B cell (primary cell): ENCODE measurements at regions of chr5 and their contacts with region 1.

Region 1: DNA sequence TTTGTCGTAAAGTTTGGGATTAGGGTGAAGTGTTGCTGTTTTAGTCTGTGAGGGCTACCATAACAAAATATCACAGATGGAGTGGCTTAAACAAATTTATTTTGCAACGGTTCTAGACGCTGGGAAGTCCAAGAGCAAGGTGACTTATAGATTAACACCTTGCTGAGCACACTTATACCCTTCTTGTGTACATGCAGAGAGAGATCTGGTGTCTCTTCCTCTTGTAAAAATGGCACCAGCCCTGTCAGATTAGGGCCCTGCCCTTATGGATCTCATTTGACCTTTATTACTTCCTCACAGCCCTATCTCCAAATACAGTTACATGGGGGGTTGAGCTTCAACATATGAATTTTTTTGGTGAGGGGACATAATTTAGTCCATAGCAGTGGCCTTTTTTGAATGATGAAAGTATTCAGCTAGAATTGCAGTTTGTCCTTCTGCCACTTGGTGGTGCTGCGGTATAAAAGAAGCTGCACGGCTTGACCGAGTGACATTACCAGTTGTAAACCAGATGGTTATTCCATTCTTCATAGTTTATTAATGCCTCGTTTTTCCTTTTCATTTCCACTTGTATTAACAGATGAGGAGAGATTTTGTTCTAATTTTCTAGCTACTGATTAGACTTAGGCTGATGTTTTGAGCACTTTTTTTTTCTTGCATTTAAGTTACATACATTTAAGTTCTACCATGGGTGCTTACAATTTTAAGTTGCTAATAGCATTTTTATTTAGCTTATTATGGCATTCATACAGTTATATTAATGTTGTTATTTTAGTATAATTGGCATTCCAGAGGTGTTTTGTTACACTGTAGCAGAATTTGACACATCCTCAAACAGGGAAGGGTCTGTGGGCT is 19.4 kb downstream of the DCP2 start:
- DNase-seq: peak; percentile 76
- ATAC-seq: peak; percentile 72
- H3K4me3 ChIP-seq: no peak overlapping the region
- H3K4me3 Mint-ChIP-seq: no peak overlapping the region
- H3K27ac ChIP-seq: no peak overlapping the region
- H3K27ac Mint-ChIP-seq: no peak overlapping the region
- H3K4me1 ChIP-seq: peaks cover 0 to 4% of the 10 kb centered on the region in 2 donors
- H3K4me1 Mint-ChIP-seq: peaks cover 17% of the 10 kb centered on the region
- H3K27me3 ChIP-seq: no peaks in the 10 kb centered on the region
- H3K27me3 Mint-ChIP-seq: no peaks in the 10 kb centered on the region
- CTCF ChIP-seq: peak; percentile 98

Region 2: DNA sequence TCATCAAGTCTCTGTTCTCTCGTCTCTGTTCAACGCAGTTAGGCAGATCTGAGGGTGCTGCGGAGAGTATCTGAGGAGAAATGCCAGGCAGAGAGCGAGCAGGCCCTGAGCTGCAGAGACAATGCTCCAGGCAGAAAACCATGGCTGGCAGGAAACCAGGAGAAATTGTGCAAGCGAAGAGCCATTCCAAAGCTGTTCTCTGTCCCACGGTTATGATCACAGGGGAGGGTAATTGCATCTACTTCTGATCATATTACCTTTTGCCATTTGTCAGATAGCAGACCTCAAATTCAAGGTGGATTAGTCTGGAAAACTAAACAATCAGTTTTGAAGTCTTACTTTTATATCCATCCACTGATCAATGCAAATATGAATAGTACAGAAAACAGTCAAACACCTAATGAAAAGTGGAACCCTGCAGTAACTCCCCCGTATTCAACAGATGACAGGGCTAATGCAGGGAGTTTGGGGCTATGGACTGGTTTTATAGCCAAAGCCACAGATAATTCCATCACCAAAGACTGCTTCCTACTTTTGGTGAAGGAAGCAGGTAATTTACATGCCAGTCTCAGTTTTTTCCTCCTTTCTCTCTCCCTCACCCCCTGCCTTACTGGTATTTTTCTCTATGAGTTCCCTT is 208.7 kb after region 1 on chr5:
- CTCF ChIA-PET with region 1: no interaction called
- POLR2A ChIA-PET with region 1: no interaction called
- intact Hi-C with region 1: no loop called
- DNase-seq: no peak
- ATAC-seq: no peak
- H3K4me3 ChIP-seq: no peak overlapping the region
- H3K4me3 Mint-ChIP-seq: no peak overlapping the region
- H3K27ac ChIP-seq: no peak overlapping the region
- H3K27ac Mint-ChIP-seq: no peak overlapping the region
- H3K4me1 ChIP-seq: no peaks in the 10 kb centered on the region
- H3K4me1 Mint-ChIP-seq: no peaks in the 10 kb centered on the region
- H3K27me3 ChIP-seq: no peaks in the 10 kb centered on the region
- H3K27me3 Mint-ChIP-seq: peaks cover 6% of the 10 kb centered on the region
- CTCF ChIP-seq: no peak

Region 3: DNA sequence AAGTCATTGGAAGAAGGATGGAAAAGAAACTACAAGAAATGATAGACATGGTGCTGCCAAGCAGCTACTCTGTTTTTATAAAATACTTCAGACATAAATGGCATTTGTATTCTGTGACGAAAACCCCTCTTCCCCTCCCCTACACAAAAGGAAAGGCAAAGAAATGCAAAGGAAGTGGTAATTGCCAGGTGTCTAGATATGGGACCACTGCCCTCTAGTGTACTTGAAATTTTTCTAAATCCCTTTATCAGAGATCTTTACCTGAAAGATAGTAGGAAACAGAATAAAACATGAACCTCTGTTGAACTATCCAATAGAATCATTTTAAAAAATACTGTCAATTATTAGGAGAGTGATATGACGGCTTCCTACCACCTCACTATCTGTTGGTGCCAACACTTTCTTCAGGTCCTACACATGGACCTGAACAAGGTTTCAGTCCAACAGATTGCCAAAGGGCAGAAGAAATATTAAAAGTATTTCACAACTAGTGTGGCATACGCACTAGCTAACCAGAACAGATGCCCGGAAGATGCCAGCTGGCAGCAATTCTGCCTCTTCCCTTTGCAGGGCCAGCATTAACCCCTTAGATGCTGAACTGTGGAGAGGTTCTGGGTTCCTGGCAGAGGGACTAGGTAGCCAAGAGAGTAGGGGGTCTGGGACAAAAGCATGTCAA is 334.7 kb after region 1 on chr5:
- CTCF ChIA-PET with region 1: interaction called, 45 read pairs
- POLR2A ChIA-PET with region 1: interaction called, 8 read pairs
- intact Hi-C with region 1: no loop called
- DNase-seq: peak; percentile 43
- ATAC-seq: peak; percentile 43
- H3K4me3 ChIP-seq: peak overlapping the region in 1 of 5 experiments; percentile 27
- H3K4me3 Mint-ChIP-seq: no peak overlapping the region
- H3K27ac ChIP-seq: no peak overlapping the region
- H3K27ac Mint-ChIP-seq: no peak overlapping the region
- H3K4me1 ChIP-seq: peaks cover 0 to 6% of the 10 kb centered on the region in 2 donors
- H3K4me1 Mint-ChIP-seq: peaks cover 5% of the 10 kb centered on the region
- H3K27me3 ChIP-seq: no peaks in the 10 kb centered on the region
- H3K27me3 Mint-ChIP-seq: peaks cover 6% of the 10 kb centered on the region
- CTCF ChIP-seq: peak; percentile 34

Region 4: DNA sequence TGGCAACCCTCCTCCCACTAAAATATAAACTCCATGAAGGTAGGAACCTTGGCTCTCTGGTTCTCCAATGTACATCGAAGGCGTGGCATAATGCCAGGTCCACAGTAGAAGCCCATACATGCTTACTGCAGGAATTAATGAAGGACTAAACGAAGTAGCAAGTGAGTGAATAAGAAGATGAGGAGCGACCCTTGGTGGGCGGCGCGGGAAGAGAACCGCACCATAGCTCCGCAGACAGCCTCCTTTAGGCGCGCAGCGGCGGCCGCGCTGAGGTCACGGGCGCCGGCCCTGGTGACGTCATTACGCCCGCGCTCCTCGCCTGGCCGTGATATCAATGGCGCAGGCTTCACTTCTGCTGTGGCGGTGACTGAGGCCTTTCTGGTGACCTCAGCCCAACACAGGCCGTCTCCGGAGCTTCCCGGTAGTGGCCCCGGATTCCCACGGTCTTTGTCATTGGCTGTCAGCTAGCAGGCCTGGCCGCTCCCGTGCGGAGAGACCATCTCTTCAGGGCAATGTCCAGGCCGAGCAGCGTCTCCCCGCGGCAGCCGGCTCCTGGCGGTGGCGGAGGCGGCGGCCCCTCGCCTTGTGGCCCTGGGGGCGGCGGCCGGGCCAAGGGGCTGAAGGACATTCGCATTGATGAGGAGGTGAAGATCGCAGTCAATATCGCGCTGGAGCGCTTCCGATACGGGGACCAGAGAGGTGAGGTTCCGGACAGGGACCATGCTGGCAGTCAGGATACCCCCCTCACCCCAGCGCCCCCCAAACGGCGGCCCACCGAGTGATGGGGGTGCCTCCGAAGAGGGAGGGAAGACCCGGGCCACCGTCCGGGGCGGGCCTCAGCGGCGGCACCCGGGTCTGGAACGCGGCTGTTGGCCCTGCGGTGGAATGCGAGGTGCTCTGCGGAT is 517.6 kb after region 1 on chr5 and contains the start of gene YTHDC2:
- CTCF ChIA-PET with region 1: interaction called, 29 read pairs
- POLR2A ChIA-PET with region 1: no interaction called
- intact Hi-C with region 1: loop called (anchors 5 kb)
- DNase-seq: peak; percentile 93
- ATAC-seq: peak; percentile 97
- H3K4me3 ChIP-seq: peak within 1 kb of the TSS; percentile 59 to 93 (median 84)
- H3K4me3 Mint-ChIP-seq: peak within 1 kb of the TSS; percentile 99
- H3K27ac ChIP-seq: peak within 1 kb of the TSS; percentile 83 to 93
- H3K27ac Mint-ChIP-seq: peak within 1 kb of the TSS; percentile 95
- H3K4me1 ChIP-seq: peaks cover 7 to 17% of the 10 kb centered on the region in 2 donors
- H3K4me1 Mint-ChIP-seq: peaks cover 30% of the 10 kb centered on the region
- H3K27me3 ChIP-seq: peaks cover 0 to 8% (median 3%) of the 10 kb centered on the region in 4 experiments
- H3K27me3 Mint-ChIP-seq: peaks cover 18% of the 10 kb centered on the region
- CTCF ChIP-seq: peak; percentile 18
- total RNA-seq, gene YTHDC2: 52.6 and 62.4 TPM in 2 replicates

Region 5: GRCh38 chr5:113606298-113607134 is 610.5 kb after region 1 on chr5:
- CTCF ChIA-PET with region 1: interaction called, 52 read pairs
- POLR2A ChIA-PET with region 1: no interaction called
- intact Hi-C with region 1: no loop called
- DNase-seq: peak; percentile 61
- ATAC-seq: peak; percentile 57
- H3K4me3 ChIP-seq: no peak overlapping the region
- H3K4me3 Mint-ChIP-seq: no peak overlapping the region
- H3K27ac ChIP-seq: no peak overlapping the region
- H3K27ac Mint-ChIP-seq: no peak overlapping the region
- H3K4me1 ChIP-seq: peaks cover 0 to 3% of the 10 kb centered on the region in 2 donors
- H3K4me1 Mint-ChIP-seq: no peaks in the 10 kb centered on the region
- H3K27me3 ChIP-seq: peaks cover 0 to 21% (median 11%) of the 10 kb centered on the region in 4 experiments
- H3K27me3 Mint-ChIP-seq: peaks cover 37% of the 10 kb centered on the region
- CTCF ChIP-seq: peak; percentile 85